CD4-positive, alpha-beta T cell (primary cell): ENCODE measurements at regions of chr2 and their contacts with region 1.

Region 1: GRCh38 chr2:186617771-186618170 is 27.9 kb downstream of the ITGAV start:
- DNase-seq: no peak
- ATAC-seq: no peak
- H3K4me3 ChIP-seq: no peak overlapping the region
- H3K4me3 Mint-ChIP-seq: no peak overlapping the region
- H3K27ac ChIP-seq: no peak overlapping the region
- H3K27ac Mint-ChIP-seq: no peak overlapping the region
- H3K4me1 ChIP-seq: no peaks in the 10 kb centered on the region
- H3K4me1 Mint-ChIP-seq: no peaks in the 10 kb centered on the region
- H3K27me3 ChIP-seq: no peaks in the 10 kb centered on the region
- H3K27me3 Mint-ChIP-seq: no peaks in the 10 kb centered on the region
- CTCF ChIP-seq: no peak

Region 2: DNA sequence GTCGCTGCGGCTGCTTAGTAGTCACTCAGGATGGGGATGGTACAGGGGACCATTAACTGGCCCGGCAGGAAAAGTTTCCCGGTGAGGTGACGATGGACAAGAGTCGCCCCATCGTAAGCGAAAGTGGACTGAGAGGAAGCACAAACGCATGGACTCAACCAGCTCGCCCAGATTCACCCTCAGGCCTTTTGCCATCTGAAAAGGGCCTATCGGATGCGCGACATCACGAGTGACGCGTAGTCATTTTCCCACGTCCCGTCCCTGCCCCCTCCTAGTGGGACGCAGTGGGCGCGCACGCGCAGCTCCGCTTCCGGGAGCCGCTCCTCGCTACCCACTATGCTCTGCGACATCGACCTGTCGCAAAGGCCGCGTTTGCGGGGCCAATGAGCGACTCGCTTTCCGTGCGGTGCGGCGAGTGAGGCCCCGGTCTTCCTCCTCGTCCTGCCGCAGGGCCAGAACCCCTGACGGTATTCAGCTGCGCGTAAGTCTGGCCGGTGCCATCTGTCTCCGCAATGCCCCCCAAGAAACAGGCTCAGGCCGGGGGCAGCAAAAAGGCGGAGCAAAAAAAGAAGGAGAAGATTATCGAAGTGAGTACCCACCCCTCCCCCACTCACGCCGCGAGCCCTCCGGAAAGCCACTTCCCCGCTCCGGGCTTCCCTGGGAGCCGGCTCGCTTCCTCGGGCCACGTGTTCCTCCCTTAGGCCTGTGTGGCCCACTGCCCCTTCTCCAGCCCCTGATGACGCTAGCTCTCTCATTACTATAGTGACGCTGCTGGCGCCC is 131.7 kb before region 1 on chr2 and contains the start of gene ZC3H15:
- CTCF ChIA-PET with region 1: no interaction called
- POLR2A ChIA-PET with region 1: no interaction called
- intact Hi-C with region 1: no loop called
- DNase-seq: peak; percentile 90 to 99 (median 95)
- ATAC-seq: peak; percentile 93
- H3K4me3 ChIP-seq: peak within 1 kb of the TSS; percentile 70
- H3K4me3 Mint-ChIP-seq: peak within 1 kb of the TSS; percentile 99
- H3K27ac ChIP-seq: peak within 1 kb of the TSS; percentile 87 to 96
- H3K27ac Mint-ChIP-seq: peak within 1 kb of the TSS; percentile 98
- H3K4me1 ChIP-seq: peaks cover 11% of the 10 kb centered on the region
- H3K4me1 Mint-ChIP-seq: peaks cover 78% of the 10 kb centered on the region
- H3K27me3 ChIP-seq: no peaks in the 10 kb centered on the region
- H3K27me3 Mint-ChIP-seq: no peaks in the 10 kb centered on the region
- CTCF ChIP-seq: no peak
- total RNA-seq, gene ZC3H15: 124 to 140 TPM

Region 3: GRCh38 chr2:186544255-186544675 is 73.5 kb before region 1 on chr2:
- CTCF ChIA-PET with region 1: no interaction called
- POLR2A ChIA-PET with region 1: no interaction called
- intact Hi-C with region 1: no loop called
- DNase-seq: peak in 1 of 14 experiments; percentile 21
- ATAC-seq: no peak
- H3K4me3 ChIP-seq: no peak overlapping the region
- H3K4me3 Mint-ChIP-seq: no peak overlapping the region
- H3K27ac ChIP-seq: no peak overlapping the region
- H3K27ac Mint-ChIP-seq: no peak overlapping the region
- H3K4me1 ChIP-seq: no peaks in the 10 kb centered on the region
- H3K4me1 Mint-ChIP-seq: no peaks in the 10 kb centered on the region
- H3K27me3 ChIP-seq: no peaks in the 10 kb centered on the region
- H3K27me3 Mint-ChIP-seq: peaks cover 11% of the 10 kb centered on the region
- CTCF ChIP-seq: no peak

Region 4: GRCh38 chr2:186605041-186605440 is 12.7 kb before region 1 on chr2:
- CTCF ChIA-PET with region 1: interaction called, 4 read pairs
- POLR2A ChIA-PET with region 1: no interaction called
- intact Hi-C with region 1: loop called in 1 of 2 experiments (anchors 1 kb)
- DNase-seq: no peak
- ATAC-seq: no peak
- H3K4me3 ChIP-seq: no peak overlapping the region
- H3K4me3 Mint-ChIP-seq: no peak overlapping the region
- H3K27ac ChIP-seq: no peak overlapping the region
- H3K27ac Mint-ChIP-seq: no peak overlapping the region
- H3K4me1 ChIP-seq: no peaks in the 10 kb centered on the region
- H3K4me1 Mint-ChIP-seq: no peaks in the 10 kb centered on the region
- H3K27me3 ChIP-seq: no peaks in the 10 kb centered on the region
- H3K27me3 Mint-ChIP-seq: no peaks in the 10 kb centered on the region
- CTCF ChIP-seq: no peak